PC-9 (cell line): ENCODE measurements at regions of chr5 and their contacts with region 1.

Region 1: DNA sequence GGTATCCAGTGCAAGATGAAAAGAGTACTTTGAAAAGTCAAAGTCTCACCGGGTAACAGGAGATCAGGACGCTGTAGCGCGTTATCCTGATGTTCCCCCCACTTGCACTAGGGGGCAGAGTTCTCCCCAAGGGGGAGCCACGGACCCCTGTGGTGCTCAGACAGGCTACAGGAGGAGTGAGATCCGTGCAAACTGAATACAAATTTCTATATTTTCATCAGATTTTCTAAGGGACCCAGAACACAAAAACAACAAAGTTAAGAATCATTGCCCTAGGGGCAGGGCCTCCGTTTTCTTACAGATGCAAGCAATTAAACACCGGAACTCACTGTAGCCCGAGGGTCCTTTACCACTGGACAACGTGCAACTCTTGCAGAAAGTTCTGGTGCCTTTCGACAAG is 2.0 kb downstream of the MYO10 start:
- DNase-seq: peak; percentile 69 to 92
- H3K4me3 ChIP-seq: peak overlapping the region; percentile 93
- H3K27ac ChIP-seq: 0 out of 2 replicates have a peak overlapping the region, but pooled peaks have one; percentile 7
- H3K4me1 ChIP-seq: peaks cover 37% of the 10 kb centered on the region
- H3K27me3 ChIP-seq: no peaks in the 10 kb centered on the region
- CTCF ChIP-seq: peak; percentile 99

Region 2: DNA sequence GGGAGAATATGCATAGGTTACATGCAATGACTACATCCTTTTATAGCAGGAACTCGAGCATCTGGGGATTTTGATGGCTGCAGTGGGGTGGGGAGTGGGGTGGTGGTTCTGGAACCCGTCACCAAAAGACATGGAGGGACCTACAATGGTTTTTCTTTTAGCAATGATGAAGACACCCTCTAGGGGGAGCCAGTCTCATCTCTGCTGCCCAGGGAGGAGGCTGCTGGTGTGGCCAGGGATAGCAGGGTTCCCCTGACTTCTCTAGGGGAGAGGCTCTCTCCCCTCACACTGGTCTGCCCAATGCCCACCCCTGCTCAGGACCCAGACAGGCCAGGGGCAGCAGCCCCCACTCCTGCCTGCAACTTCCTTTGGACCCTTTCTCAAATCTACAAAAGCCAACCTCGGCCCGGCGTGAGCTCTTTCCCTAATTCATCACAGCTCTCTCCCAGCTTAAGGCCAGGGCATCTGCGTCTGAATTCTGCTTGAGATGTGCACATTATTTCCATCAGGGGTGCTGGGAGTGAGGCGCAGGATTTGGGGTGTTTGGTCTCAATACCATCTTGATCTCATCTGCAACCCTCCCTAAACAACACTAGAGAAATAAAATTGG is 243.8 kb before region 1 on chr5:
- CTCF ChIA-PET with region 1: no interaction called
- POLR2A ChIA-PET with region 1: no interaction called
- intact Hi-C with region 1: loop called (anchors 10 kb)
- DNase-seq: peak in 1 of 2 experiments; percentile 66
- H3K4me3 ChIP-seq: no peak overlapping the region
- H3K27ac ChIP-seq: no peak overlapping the region
- H3K4me1 ChIP-seq: no peaks in the 10 kb centered on the region
- H3K27me3 ChIP-seq: no peaks in the 10 kb centered on the region
- CTCF ChIP-seq: peak; percentile 85

Region 3: GRCh38 chr5:16784843-16785791 is 149.0 kb before region 1 on chr5:
- CTCF ChIA-PET with region 1: no interaction called
- POLR2A ChIA-PET with region 1: no interaction called
- intact Hi-C with region 1: no loop called
- DNase-seq: no peak
- H3K4me3 ChIP-seq: no peak overlapping the region
- H3K27ac ChIP-seq: no peak overlapping the region
- H3K4me1 ChIP-seq: no peaks in the 10 kb centered on the region
- H3K27me3 ChIP-seq: no peaks in the 10 kb centered on the region
- CTCF ChIP-seq: no peak

Region 4: DNA sequence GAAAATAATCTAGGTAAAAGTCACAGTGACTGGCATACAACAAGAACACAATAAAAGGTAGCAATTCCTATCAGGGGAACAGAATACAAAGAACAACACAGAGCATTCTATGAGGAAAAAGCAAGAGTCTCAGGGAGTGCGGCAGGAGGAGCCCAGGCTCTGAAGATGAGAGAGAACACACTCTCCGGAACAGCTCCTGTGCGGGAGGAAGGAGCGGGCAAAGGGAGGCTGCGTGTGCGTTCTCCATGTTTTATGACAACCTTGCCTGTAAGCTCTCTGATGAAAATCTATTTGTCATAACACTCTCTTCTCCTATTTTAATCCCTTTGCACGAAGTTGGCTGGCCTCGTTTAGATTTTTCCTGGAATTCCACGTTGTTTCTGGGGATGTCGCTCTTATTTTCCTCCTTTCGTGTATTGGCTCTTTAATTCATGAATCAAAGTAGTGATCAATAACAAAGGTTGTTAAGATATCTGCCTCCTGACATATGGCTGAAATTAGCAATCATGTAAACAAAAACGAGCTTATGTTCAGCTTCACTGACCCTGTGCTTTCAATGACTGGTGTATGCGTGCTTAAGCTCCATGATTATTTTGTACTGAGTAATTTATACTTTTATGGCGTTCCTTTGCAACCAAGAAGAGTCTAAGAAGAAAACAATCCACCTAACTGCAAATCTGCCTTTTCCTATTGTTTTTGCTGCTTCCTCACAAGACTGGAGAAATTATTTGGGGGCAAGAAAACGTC is 107.6 kb before region 1 on chr5:
- CTCF ChIA-PET with region 1: no interaction called
- POLR2A ChIA-PET with region 1: interaction called, 23 read pairs
- intact Hi-C with region 1: no loop called
- DNase-seq: no peak
- H3K4me3 ChIP-seq: no peak overlapping the region
- H3K27ac ChIP-seq: no peak overlapping the region
- H3K4me1 ChIP-seq: no peaks in the 10 kb centered on the region
- H3K27me3 ChIP-seq: no peaks in the 10 kb centered on the region
- CTCF ChIP-seq: no peak

Region 5: GRCh38 chr5:16894236-16895057 is 39.7 kb before region 1 on chr5:
- CTCF ChIA-PET with region 1: interaction called, 5 read pairs
- POLR2A ChIA-PET with region 1: interaction called, 7 read pairs
- intact Hi-C with region 1: loop called (anchors 1 kb)
- DNase-seq: peak; percentile 91 to 99
- H3K4me3 ChIP-seq: peak overlapping the region; percentile 41; the same call in 1 of the 2 replicates
- H3K27ac ChIP-seq: peak overlapping the region; percentile 92
- H3K4me1 ChIP-seq: peaks cover 88% of the 10 kb centered on the region
- H3K27me3 ChIP-seq: no peaks in the 10 kb centered on the region
- CTCF ChIP-seq: no peak

Region 6: GRCh38 chr5:17000291-17000939 is 66.3 kb after region 1 on chr5:
- CTCF ChIA-PET with region 1: no interaction called
- POLR2A ChIA-PET with region 1: no interaction called
- intact Hi-C with region 1: loop called (anchors 1 kb)
- DNase-seq: peak; percentile 41 to 86
- H3K4me3 ChIP-seq: no peak overlapping the region
- H3K27ac ChIP-seq: peak overlapping the region; percentile 45
- H3K4me1 ChIP-seq: peaks cover 12% of the 10 kb centered on the region
- H3K27me3 ChIP-seq: no peaks in the 10 kb centered on the region
- CTCF ChIP-seq: no peak

Region 7: DNA sequence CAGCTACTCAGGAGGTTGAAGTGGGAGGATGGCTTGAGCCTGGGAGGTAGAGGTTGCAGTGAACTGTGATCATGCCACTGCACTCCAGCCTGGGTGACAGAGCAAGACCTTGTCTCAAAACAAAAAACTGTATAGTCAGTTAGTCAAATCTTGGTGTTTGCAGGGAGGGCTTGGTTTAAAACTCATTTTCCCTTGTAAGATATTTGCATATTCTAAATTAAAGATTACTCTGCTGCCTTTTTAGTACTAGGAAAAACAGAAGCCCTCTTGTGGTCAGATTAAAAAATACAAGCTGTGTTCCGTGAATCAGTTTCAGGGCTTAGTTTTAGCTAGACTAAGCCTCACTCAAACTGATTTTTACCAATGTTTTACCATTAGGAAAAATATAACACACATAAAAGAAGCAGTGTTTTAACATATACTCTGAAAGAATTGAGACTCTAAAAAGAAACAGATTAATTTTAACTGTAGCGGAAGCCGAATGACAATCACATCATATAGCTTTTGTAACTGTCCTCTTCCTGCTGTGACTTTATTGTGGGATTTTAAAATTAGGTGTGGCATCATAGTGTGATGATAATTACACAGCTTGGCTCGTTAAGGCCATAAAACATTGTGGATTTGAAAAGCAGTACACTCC is 198.4 kb after region 1 on chr5:
- CTCF ChIA-PET with region 1: interaction called, 16 read pairs
- POLR2A ChIA-PET with region 1: no interaction called
- intact Hi-C with region 1: loop called (anchors 1 kb)
- DNase-seq: no peak
- H3K4me3 ChIP-seq: no peak overlapping the region
- H3K27ac ChIP-seq: no peak overlapping the region
- H3K4me1 ChIP-seq: peaks cover 10% of the 10 kb centered on the region
- H3K27me3 ChIP-seq: no peaks in the 10 kb centered on the region
- CTCF ChIP-seq: peak; percentile 92

Region 8: GRCh38 chr5:17189381-17190036 is 255.4 kb after region 1 on chr5:
- CTCF ChIA-PET with region 1: interaction called, 35 read pairs
- POLR2A ChIA-PET with region 1: interaction called, 11 read pairs
- intact Hi-C with region 1: loop called (anchors 1 kb)
- DNase-seq: peak; percentile 56 to 86
- H3K4me3 ChIP-seq: no peak overlapping the region
- H3K27ac ChIP-seq: no peak overlapping the region
- H3K4me1 ChIP-seq: peaks cover 10% of the 10 kb centered on the region
- H3K27me3 ChIP-seq: no peaks in the 10 kb centered on the region
- CTCF ChIP-seq: peak; percentile 99

Region 9: GRCh38 chr5:18393589-18394442 is 1459.7 kb after region 1 on chr5:
- CTCF ChIA-PET with region 1: no interaction called
- POLR2A ChIA-PET with region 1: no interaction called
- intact Hi-C with region 1: no loop called
- DNase-seq: peak in 1 of 2 experiments; percentile 80
- H3K4me3 ChIP-seq: no peak overlapping the region
- H3K27ac ChIP-seq: no peak overlapping the region
- H3K4me1 ChIP-seq: no peaks in the 10 kb centered on the region
- H3K27me3 ChIP-seq: no peaks in the 10 kb centered on the region
- CTCF ChIP-seq: peak; percentile 95